ENCODE measurements at regions of chr5 and their contacts with region 1.

Region 1: GRCh38 chr5:18699681-18700080 is 1065.4 kb downstream of the TAF11L14 start:
- DNase-seq: no peak
- ATAC-seq: no peak
- H3K4me3 Mint-ChIP-seq: no peak overlapping the region
- H3K27ac Mint-ChIP-seq: no peak overlapping the region
- H3K4me1 Mint-ChIP-seq: peaks cover 16% of the 10 kb centered on the region
- H3K27me3 Mint-ChIP-seq: no peaks in the 10 kb centered on the region
- CTCF ChIP-seq: no peak

Region 2: DNA sequence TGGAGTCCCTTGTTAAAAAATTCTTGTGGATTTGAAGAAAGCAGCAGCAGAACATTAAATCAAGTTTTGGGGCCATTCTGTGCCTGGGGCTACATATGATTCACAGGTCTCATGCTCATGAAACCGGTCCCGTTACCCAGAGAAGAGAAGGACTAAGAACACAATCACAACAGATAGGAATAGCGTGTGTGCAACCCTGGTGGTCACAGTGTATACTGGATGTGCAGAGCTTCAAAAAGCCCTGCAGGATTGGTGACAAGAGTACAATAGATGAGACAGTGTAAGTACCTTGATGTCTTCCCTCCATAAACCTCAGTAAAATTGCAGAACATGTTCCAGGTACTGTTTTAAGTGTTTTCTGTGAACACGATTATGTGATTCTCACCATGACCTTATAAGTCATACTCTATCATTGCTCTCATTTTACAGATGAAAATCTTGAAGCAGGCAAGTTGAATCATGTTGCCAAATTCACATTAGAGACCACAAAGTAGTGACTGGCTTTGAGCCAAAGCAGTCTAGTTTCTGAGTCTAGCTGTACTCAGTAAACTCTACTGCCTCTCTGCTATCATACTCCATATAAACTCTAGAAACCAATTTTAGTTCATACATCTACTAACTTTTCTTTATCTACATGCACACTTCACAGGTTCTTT is 428.9 kb before region 1 on chr5:
- CTCF ChIA-PET with region 1: no interaction called
- POLR2A ChIA-PET with region 1: no interaction called
- intact Hi-C with region 1: no loop called
- DNase-seq: no peak
- ATAC-seq: no peak
- H3K4me3 Mint-ChIP-seq: no peak overlapping the region
- H3K27ac Mint-ChIP-seq: no peak overlapping the region
- H3K4me1 Mint-ChIP-seq: no peaks in the 10 kb centered on the region
- H3K27me3 Mint-ChIP-seq: no peaks in the 10 kb centered on the region
- CTCF ChIP-seq: no peak

Region 3: GRCh38 chr5:18393589-18394442 is 305.9 kb before region 1 on chr5:
- CTCF ChIA-PET with region 1: interaction called, 6 read pairs
- POLR2A ChIA-PET with region 1: no interaction called
- intact Hi-C with region 1: loop called (anchors 10 kb)
- DNase-seq: peak; percentile 62
- ATAC-seq: no peak
- H3K4me3 Mint-ChIP-seq: no peak overlapping the region
- H3K27ac Mint-ChIP-seq: no peak overlapping the region
- H3K4me1 Mint-ChIP-seq: no peaks in the 10 kb centered on the region
- H3K27me3 Mint-ChIP-seq: no peaks in the 10 kb centered on the region
- CTCF ChIP-seq: peak; percentile 77

Region 4: GRCh38 chr5:18465833-18466591 is 233.7 kb before region 1 on chr5:
- CTCF ChIA-PET with region 1: interaction called, 4 read pairs
- POLR2A ChIA-PET with region 1: no interaction called
- intact Hi-C with region 1: loop called (anchors 2 kb)
- DNase-seq: peak; percentile 49
- ATAC-seq: no peak
- H3K4me3 Mint-ChIP-seq: no peak overlapping the region
- H3K27ac Mint-ChIP-seq: no peak overlapping the region
- H3K4me1 Mint-ChIP-seq: no peaks in the 10 kb centered on the region
- H3K27me3 Mint-ChIP-seq: no peaks in the 10 kb centered on the region
- CTCF ChIP-seq: peak; percentile 33

Region 5: DNA sequence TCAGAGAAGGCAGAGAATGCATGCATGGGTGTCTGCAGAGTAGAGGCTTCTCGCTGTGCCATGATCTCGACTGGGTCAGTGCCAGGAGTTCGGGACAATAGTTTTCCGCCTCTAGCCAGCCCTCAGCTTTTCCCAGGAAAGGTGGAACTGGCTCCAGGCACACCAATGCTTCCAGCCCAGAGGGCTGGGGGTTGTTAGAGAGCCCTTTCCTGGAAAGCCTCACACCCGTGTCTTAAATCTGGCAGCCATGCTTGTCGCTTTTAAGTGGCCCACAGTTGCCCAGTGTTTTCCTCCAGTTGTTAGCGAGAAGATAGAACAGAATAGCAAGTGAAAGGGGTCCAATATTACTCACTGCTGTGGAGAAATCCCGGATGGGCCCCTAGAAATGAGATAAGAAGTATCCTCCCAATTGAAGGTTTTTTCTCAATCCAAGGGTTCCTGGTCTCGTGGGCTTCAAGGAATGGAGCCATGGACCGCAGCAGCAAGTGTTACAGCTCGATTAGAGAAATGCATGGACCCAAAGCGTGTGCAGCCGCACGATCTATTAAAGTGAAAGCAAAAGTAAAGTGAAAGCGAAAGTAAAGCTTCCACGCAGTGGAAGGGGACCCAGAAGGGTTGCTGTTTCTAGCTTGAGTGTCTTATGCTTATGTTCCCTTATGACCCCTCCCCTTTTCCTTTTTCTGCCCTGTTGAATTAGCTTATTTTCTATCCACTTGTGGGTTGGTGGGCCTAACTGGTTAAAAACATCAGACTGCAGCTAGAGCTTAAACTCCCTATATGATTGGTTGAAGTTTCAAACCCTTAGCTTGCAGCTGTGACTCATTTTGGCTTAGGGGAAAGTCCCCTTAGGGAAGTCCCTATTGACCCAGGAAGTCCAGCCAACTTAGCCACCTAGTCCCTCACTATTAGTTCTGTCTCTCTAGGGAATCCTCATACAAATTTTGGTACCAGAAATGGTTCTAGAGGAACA is 46.2 kb after region 1 on chr5:
- CTCF ChIA-PET with region 1: interaction called, 4 read pairs
- POLR2A ChIA-PET with region 1: interaction called, 3 read pairs
- intact Hi-C with region 1: loop called (anchors 5 kb)
- DNase-seq: peak; percentile 46
- ATAC-seq: peak; percentile 79
- H3K4me3 Mint-ChIP-seq: peak overlapping the region; percentile 87
- H3K27ac Mint-ChIP-seq: peak overlapping the region; percentile 88
- H3K4me1 Mint-ChIP-seq: peaks cover 57% of the 10 kb centered on the region
- H3K27me3 Mint-ChIP-seq: no peaks in the 10 kb centered on the region
- CTCF ChIP-seq: no peak

Region 6: DNA sequence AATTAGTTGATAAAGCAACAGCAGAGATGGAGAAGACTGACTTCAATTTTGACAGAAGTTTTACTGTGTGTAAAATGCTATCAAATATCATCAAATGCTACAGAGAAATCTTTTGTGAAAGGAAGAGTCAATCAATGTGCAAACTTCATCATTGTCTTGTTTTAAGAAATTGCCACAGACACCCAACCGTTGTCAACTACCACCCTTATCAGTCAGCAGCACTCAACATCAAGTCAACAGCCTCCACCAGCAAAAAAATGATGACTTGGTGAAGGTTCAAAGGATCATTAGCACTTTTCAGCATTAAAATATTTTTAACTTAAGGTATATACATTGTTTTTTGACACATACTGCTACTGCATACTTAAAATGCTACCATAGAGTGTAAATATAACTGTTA is 399.5 kb after region 1 on chr5:
- CTCF ChIA-PET with region 1: no interaction called
- POLR2A ChIA-PET with region 1: no interaction called
- intact Hi-C with region 1: no loop called
- DNase-seq: no peak
- ATAC-seq: no peak
- H3K4me3 Mint-ChIP-seq: no peak overlapping the region
- H3K27ac Mint-ChIP-seq: no peak overlapping the region
- H3K4me1 Mint-ChIP-seq: no peaks in the 10 kb centered on the region
- H3K27me3 Mint-ChIP-seq: no peaks in the 10 kb centered on the region
- CTCF ChIP-seq: no peak